Psoas muscle (tissue), 8 donors: ENCODE measurements at regions of chr5 and their contacts with region 1.

Region 1: DNA sequence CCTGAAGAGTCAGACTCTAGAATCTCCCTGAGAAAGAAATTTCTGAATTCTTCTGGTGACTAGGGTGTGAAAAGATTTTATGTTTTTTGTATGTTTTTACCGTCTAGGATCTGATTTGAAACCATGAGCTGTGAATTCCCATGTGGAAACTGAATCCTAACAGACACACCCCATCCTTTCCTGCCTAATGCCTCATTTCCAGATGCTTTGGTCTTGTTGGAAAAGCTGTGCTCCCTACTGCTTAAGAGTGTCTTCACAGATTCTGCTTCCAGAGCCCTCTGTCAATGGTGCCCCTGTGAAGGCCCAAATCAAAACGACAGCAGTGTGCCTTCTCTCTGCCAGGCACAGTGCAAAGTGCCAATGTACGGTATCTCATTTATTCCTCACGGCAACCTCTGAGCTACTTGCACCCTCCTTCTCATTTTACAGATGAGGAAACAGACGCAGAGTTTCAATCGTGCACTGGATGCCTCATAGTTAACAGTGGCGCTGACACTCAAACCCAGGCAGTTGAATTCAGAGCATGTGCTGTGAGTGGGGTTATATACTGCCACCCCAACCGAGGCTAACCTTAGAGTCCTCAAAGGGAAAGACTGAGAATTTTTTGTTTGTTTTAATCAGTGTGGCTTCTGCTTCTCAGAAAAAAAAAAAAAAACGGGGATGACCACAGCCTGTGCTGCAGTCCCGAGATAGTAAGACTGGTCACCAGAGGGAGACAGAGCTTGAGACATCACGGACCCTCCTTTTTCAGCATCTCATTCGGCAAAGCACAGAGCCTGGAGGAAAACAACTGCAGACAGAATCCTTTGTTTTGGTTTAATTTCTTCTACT is 188.4 kb downstream of the SNCAIP start:
- DNase-seq: peak in 1 of 2 donors; percentile 13
- ATAC-seq: peak; percentile 36 to 76 (median 39)
- H3K4me3 ChIP-seq: no peak overlapping the region
- H3K27ac ChIP-seq: no peak overlapping the region
- H3K4me1 ChIP-seq: no peaks in the 10 kb centered on the region
- H3K27me3 ChIP-seq: no peaks in the 10 kb centered on the region
- CTCF ChIP-seq: peak; percentile 35

Region 2: DNA sequence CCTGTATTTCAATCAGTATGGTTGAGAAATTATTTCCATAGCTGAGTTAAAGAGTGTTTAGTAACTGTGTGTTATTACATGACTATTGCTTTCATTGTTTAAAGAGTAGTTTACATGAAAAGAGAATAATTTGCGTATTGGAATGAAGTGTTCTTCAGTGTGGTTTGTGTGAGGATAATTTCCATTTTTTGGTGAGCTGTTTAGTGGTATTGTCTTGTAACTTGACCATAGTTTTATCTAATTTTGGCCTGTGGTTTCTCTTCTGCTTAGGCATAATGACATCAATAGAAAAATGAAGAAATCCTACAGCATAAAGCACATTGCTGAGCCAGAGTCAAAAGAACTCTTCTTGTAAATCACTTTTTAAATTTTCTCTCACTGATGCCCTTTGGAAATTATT is 37.2 kb before region 1 on chr5:
- intact Hi-C with region 1: no loop called
- DNase-seq: no peak
- ATAC-seq: no peak
- H3K4me3 ChIP-seq: no peak overlapping the region
- H3K27ac ChIP-seq: no peak overlapping the region
- H3K4me1 ChIP-seq: no peaks in the 10 kb centered on the region
- H3K27me3 ChIP-seq: no peaks in the 10 kb centered on the region
- CTCF ChIP-seq: no peak

Region 3: DNA sequence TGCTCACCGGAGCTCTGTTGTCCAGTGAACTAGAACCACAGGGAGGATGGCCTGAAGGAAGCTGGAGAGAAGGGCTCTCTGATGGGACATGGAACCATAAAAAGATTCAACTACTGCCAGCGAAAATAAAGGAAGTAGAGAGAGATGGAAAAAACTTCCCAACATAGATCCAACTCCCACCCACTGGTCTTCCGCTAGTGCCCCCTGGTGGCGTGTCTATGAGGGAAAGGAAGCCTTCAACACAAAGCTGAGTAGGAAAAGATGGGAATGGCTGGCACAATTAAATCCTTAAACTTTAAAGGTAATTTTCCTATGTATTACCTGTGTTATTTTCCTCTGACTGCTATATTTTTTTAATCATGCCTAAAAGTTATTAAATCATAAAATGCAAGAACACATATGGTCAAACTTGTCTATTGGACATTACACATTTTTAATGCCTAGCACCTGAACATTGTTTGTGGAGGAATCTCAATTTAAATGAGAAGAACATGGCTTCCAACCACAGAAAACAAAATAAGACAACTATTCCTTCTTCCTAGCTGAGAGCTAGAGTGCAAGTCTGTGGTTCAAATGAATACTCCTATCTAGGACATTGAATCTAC is 871.2 kb after region 1 on chr5:
- intact Hi-C with region 1: loop called (anchors 5 to 10 kb)
- DNase-seq: peak; percentile 51 to 65
- ATAC-seq: no peak
- H3K4me3 ChIP-seq: no peak overlapping the region
- H3K27ac ChIP-seq: no peak overlapping the region
- H3K4me1 ChIP-seq: no peaks in the 10 kb centered on the region
- H3K27me3 ChIP-seq: no peaks in the 10 kb centered on the region
- CTCF ChIP-seq: peak; percentile 39